Mammary epithelial cell (primary cell): ENCODE measurements at regions of chr6 and their contacts with region 1.

Region 1: GRCh38 chr6:123055256-123055655 is 59.2 kb downstream of the CLVS2 start:
- DNase-seq: no peak
- H3K4me3 ChIP-seq: no peak overlapping the region
- H3K27ac ChIP-seq: no peak overlapping the region
- H3K4me1 ChIP-seq: peaks cover 7% of the 10 kb centered on the region
- H3K27me3 ChIP-seq: no peaks in the 10 kb centered on the region
- CTCF ChIP-seq: no peak

Region 2: GRCh38 chr6:122818866-122819265 is 236.4 kb before region 1 on chr6:
- CTCF ChIA-PET with region 1: no interaction called
- dilution Hi-C with region 1: no loop called
- in situ Hi-C with region 1: no loop called
- intact Hi-C with region 1: no loop called
- DNase-seq: no peak
- H3K4me3 ChIP-seq: no peak overlapping the region
- H3K27ac ChIP-seq: no peak overlapping the region
- H3K4me1 ChIP-seq: no peaks in the 10 kb centered on the region
- H3K27me3 ChIP-seq: no peaks in the 10 kb centered on the region
- CTCF ChIP-seq: no peak

Region 3: GRCh38 chr6:123007885-123008284 is 47.4 kb before region 1 on chr6:
- CTCF ChIA-PET with region 1: no interaction called
- dilution Hi-C with region 1: loop called (anchors 5 kb)
- in situ Hi-C with region 1: no loop called
- intact Hi-C with region 1: no loop called
- DNase-seq: no peak
- H3K4me3 ChIP-seq: no peak overlapping the region
- H3K27ac ChIP-seq: no peak overlapping the region
- H3K4me1 ChIP-seq: no peaks in the 10 kb centered on the region
- H3K27me3 ChIP-seq: no peaks in the 10 kb centered on the region
- CTCF ChIP-seq: no peak